Activated naive CD4-positive, alpha-beta T cell treated with anti-CD3 and anti-CD28 coated beads, Interleukin-2, amount 10 ng/mL, durations not matched to agents 7 days and 5 days (primary cell): ENCODE measurements at regions of chr16 and their contacts with region 1.

Region 1: GRCh38 chr16:21158208-21159110 is at the start of gene LDAF1:
- DNase-seq: peak; percentile 87
- H3K4me3 Mint-ChIP-seq: peak within 1 kb of the TSS; percentile 80
- H3K27ac Mint-ChIP-seq: peak within 1 kb of the TSS; percentile 77
- H3K4me1 Mint-ChIP-seq: peaks cover 23% of the 10 kb centered on the region
- H3K27me3 Mint-ChIP-seq: peaks cover 6% of the 10 kb centered on the region

Region 2: GRCh38 chr16:21300309-21301167 is 142.1 kb after region 1 on chr16:
- CTCF ChIA-PET with region 1: interaction called, 10 read pairs
- DNase-seq: peak; percentile 77
- H3K4me3 Mint-ChIP-seq: peak overlapping the region; percentile 90
- H3K27ac Mint-ChIP-seq: peak overlapping the region; percentile 26
- H3K4me1 Mint-ChIP-seq: peaks cover 24% of the 10 kb centered on the region
- H3K27me3 Mint-ChIP-seq: peaks cover 30% of the 10 kb centered on the region